T-cell (primary cell): ENCODE measurements at regions of chr19 and their contacts with region 1.

Region 1: DNA sequence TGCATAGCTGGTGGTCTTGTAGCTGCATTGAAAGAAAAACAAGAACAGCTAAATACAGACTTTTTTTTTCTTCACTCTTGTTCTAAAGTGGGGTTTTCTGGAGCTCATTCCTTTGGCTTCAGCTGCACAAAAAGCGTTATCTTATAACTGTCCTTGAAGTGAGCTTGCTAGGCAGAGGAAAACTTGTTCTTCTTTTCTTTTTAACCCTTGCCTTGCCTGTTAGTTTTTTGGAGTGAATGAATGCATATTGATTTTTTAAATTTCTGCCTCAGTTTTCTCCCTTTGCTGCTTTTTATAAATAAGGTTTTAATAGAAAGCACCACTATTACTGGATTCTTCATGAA is 1.5 kb downstream of the ZNF765 start:
- DNase-seq: no peak
- ATAC-seq: no peak
- H3K4me3 ChIP-seq: no peak overlapping the region
- H3K4me3 Mint-ChIP-seq: peak overlapping the region; percentile 95 to 97 (median 96)
- H3K27ac ChIP-seq: no peak overlapping the region
- H3K27ac Mint-ChIP-seq: no peak overlapping the region
- H3K4me1 ChIP-seq: peaks cover 3 to 15% of the 10 kb centered on the region in 2 experiments
- H3K4me1 Mint-ChIP-seq: peaks cover 34 to 36% (median 34%) of the 10 kb centered on the region in 3 donors
- H3K27me3 ChIP-seq: no peaks in the 10 kb centered on the region
- H3K27me3 Mint-ChIP-seq: no peaks in the 10 kb centered on the region

Region 2: GRCh38 chr19:53102206-53102755 is 294.2 kb before region 1 on chr19:
- CTCF ChIA-PET with region 1: interaction called in 1 of 2 experiments, 10 read pairs
- POLR2A ChIA-PET with region 1: no interaction called
- DNase-seq: peak in 1 of 35 experiments; percentile 7
- ATAC-seq: no peak
- H3K4me3 ChIP-seq: peak overlapping the region; percentile 95 to 99
- H3K4me3 Mint-ChIP-seq: peak overlapping the region; percentile 88 to 92 (median 91)
- H3K27ac ChIP-seq: peak overlapping the region; percentile 93
- H3K27ac Mint-ChIP-seq: peak overlapping the region; percentile 80 to 90
- H3K4me1 ChIP-seq: peaks cover 16 to 28% of the 10 kb centered on the region in 2 experiments
- H3K4me1 Mint-ChIP-seq: peaks cover 39 to 46% (median 45%) of the 10 kb centered on the region in 3 donors
- H3K27me3 ChIP-seq: peaks cover 0 to 4% of the 10 kb centered on the region in 2 experiments
- H3K27me3 Mint-ChIP-seq: no peaks in the 10 kb centered on the region

Region 3: DNA sequence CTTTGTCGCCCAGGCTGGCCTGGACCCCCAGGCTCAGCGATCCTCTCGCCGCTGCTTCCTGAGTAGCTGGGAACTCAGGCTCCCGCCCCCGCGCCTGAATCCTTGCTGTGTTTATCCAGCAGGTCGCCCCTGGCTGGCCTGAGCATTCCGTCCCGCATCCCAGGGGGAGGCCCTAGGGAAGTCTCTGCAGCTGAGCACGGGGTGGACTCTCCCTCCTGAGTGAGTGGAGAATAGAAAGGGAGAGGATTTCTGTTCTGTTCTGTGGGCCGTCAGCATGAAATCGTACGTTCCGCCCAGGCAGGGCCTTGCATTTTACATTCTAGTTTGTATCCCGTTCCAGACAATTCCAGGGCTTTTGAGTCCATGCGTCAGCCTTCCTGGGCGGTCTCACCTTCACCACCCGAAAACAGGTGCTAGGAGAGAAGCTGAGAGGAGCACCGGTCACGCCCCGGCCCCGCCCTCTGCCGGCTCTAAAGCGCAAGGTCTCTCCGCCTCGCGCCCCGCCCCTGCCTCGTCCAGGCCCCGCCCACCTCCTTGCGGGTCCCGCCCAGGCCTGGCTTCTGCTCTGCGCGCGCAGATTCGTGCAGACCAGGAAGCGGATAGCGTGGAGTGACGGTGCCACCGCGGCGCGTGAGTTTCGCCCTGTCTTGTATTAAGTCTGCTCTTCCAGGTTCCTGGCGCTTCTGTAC is 35.0 kb after region 1 on chr19 and contains the start of gene ZNF761:
- CTCF ChIA-PET with region 1: no interaction called
- POLR2A ChIA-PET with region 1: no interaction called
- DNase-seq: peak; percentile 90 to 99 (median 96)
- ATAC-seq: peak; percentile 96 to 99 (median 99)
- H3K4me3 ChIP-seq: peak within 1 kb of the TSS; percentile 80 to 82
- H3K4me3 Mint-ChIP-seq: peak within 1 kb of the TSS; percentile 87 to 96 (median 95)
- H3K27ac ChIP-seq: peak within 1 kb of the TSS; percentile 69
- H3K27ac Mint-ChIP-seq: peak within 1 kb of the TSS; percentile 94 to 96
- H3K4me1 ChIP-seq: peaks cover 0 to 16% of the 10 kb centered on the region in 2 experiments
- H3K4me1 Mint-ChIP-seq: peaks cover 39 to 51% (median 49%) of the 10 kb centered on the region in 3 donors
- H3K27me3 ChIP-seq: no peaks in the 10 kb centered on the region
- H3K27me3 Mint-ChIP-seq: no peaks in the 10 kb centered on the region
- total RNA-seq, gene ZNF761: 9.6 to 14.5 (median 13.0) TPM